ENCODE measurements at regions of chr2 and their contacts with region 1.

Region 1: GRCh38 chr2:19140596-19141219 is 217.7 kb downstream of the OSR1 start:
- DNase-seq: peak; percentile 95
- ATAC-seq: peak; percentile 86
- H3K4me3 ChIP-seq: no peak overlapping the region
- H3K27ac ChIP-seq: peak overlapping the region; percentile 80
- H3K4me1 ChIP-seq: peaks cover 19% of the 10 kb centered on the region
- H3K27me3 ChIP-seq: no peaks in the 10 kb centered on the region
- CTCF ChIP-seq: no peak
- POLR2A ChIP-seq: no peak
- RAD21 ChIP-seq: no peak

Region 2: GRCh38 chr2:18883616-18884456 is 256.9 kb before region 1 on chr2:
- CTCF ChIA-PET with region 1: no interaction called
- POLR2A ChIA-PET with region 1: no interaction called
- dilution Hi-C with region 1: no loop called
- in situ Hi-C with region 1: no loop called
- intact Hi-C with region 1: loop called (anchors 10 kb)
- DNase-seq: peak; percentile 62
- ATAC-seq: peak; percentile 44
- H3K4me3 ChIP-seq: no peak overlapping the region
- H3K27ac ChIP-seq: no peak overlapping the region
- H3K4me1 ChIP-seq: peaks cover 5% of the 10 kb centered on the region
- H3K27me3 ChIP-seq: no peaks in the 10 kb centered on the region
- CTCF ChIP-seq: peak; percentile 54
- POLR2A ChIP-seq: no peak
- RAD21 ChIP-seq: peak; percentile 63

Region 3: GRCh38 chr2:18987592-18988073 is 153.1 kb before region 1 on chr2:
- CTCF ChIA-PET with region 1: no interaction called
- POLR2A ChIA-PET with region 1: no interaction called
- dilution Hi-C with region 1: no loop called
- in situ Hi-C with region 1: no loop called
- intact Hi-C with region 1: loop called (anchors 5 kb)
- DNase-seq: peak; percentile 95
- ATAC-seq: peak; percentile 62
- H3K4me3 ChIP-seq: no peak overlapping the region
- H3K27ac ChIP-seq: peak overlapping the region; percentile 63; the same call in 1 of the 2 replicates
- H3K4me1 ChIP-seq: peaks cover 11% of the 10 kb centered on the region
- H3K27me3 ChIP-seq: no peaks in the 10 kb centered on the region
- CTCF ChIP-seq: peak; percentile 44
- POLR2A ChIP-seq: no peak
- RAD21 ChIP-seq: peak; percentile 27

Measured in IMR-90 (cell line).